ENCODE measurements at regions of chr16 and their contacts with region 1.

Region 1: GRCh38 chr16:68590201-68590994 is 51.3 kb downstream of the ZFP90 start:
- DNase-seq: peak; percentile 89
- ATAC-seq: peak; percentile 99
- H3K4me3 Mint-ChIP-seq: no peak overlapping the region
- H3K27ac Mint-ChIP-seq: no peak overlapping the region
- H3K4me1 Mint-ChIP-seq: peaks cover 2% of the 10 kb centered on the region
- H3K27me3 Mint-ChIP-seq: no peaks in the 10 kb centered on the region

Region 2: GRCh38 chr16:68574479-68574878 is 15.9 kb before region 1 on chr16:
- CTCF ChIA-PET with region 1: interaction called, 16 read pairs
- POLR2A ChIA-PET with region 1: no interaction called
- intact Hi-C with region 1: no loop called
- DNase-seq: no peak
- ATAC-seq: no peak
- H3K4me3 Mint-ChIP-seq: no peak overlapping the region
- H3K27ac Mint-ChIP-seq: no peak overlapping the region
- H3K4me1 Mint-ChIP-seq: no peaks in the 10 kb centered on the region
- H3K27me3 Mint-ChIP-seq: no peaks in the 10 kb centered on the region

Region 3: DNA sequence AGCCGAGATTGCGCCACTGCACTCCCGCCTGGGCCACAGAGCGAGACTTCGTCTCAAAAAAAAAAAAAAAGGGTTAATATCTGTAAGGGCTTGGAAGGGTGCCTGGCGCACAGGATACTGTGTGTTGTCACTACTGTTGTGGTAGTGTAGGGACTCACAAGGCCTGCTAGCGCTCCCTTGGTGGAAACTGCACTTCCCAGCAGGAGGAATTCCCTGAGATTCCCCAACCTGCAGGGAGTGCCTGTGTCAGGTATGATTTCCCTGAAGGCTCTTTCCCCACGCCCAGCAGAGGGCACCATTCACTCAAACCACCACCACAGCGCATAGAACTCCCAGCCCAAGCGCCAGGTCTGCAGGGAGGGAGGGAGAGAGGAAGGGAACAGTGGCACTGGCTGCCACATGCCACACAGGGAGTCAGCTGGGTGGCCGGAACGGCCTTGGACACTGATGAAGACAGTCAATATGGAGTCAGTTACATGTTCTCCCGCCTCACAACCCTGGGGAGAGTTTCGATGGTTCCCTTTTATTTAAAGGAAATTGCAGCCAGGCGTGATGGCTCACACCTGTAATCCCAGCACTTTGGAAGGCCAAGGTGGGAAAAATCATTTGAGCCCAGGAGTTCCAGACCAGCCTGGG is 114.0 kb after region 1 on chr16:
- CTCF ChIA-PET with region 1: interaction called, 9 read pairs
- POLR2A ChIA-PET with region 1: no interaction called
- intact Hi-C with region 1: loop called in 1 of 2 experiments (anchors 5 kb)
- DNase-seq: peak; percentile 83
- ATAC-seq: peak; percentile 91
- H3K4me3 Mint-ChIP-seq: no peak overlapping the region
- H3K27ac Mint-ChIP-seq: peak overlapping the region; percentile 39
- H3K4me1 Mint-ChIP-seq: peaks cover 5% of the 10 kb centered on the region
- H3K27me3 Mint-ChIP-seq: peaks cover 3% of the 10 kb centered on the region

Region 4: DNA sequence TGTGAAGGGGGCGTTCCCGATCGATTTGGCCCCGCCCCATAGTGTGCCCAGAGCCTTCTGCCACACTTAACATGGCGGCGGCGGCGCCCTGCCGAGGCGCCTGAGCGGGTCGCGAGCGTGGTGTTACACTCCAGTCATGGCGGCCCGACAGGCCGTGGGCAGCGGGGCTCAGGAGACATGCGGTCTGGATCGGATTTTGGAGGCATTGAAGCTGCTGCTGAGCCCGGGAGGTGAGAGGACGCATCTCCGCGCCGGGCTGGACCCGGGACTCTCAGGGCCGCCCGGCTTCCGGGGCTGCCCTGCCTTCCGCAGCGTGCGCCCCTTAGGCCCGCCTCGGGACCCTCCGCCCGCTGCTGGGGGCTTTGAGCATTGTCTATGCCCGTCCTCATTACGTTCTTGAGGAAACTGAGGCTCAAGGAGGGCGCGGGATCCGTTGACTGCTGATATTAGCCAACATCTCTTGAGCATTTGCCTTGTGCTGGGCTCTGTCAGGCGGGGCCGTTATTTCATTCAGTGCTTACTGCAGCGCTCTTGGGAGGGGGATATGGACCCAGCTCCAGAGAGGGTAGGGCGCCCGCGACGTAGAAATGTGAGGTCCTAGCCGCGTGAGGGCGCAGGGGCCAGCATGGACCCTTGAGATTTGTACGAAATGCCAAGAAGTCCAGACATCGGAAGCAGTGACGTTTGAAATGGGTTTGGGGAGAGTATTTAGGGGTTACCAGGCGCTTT is 253.2 kb after region 1 on chr16 and contains the start of gene TANGO6:
- CTCF ChIA-PET with region 1: interaction called, 12 read pairs
- POLR2A ChIA-PET with region 1: no interaction called
- intact Hi-C with region 1: loop called (anchors 2 kb)
- DNase-seq: peak; percentile 95
- ATAC-seq: peak; percentile 93
- H3K4me3 Mint-ChIP-seq: peak within 1 kb of the TSS; percentile 84
- H3K27ac Mint-ChIP-seq: peak within 1 kb of the TSS; percentile 91
- H3K4me1 Mint-ChIP-seq: peaks cover 27% of the 10 kb centered on the region
- H3K27me3 Mint-ChIP-seq: no peaks in the 10 kb centered on the region
- total RNA-seq, gene TANGO6: 29.7 to 31.2 TPM

Region 5: GRCh38 chr16:69123910-69124309 is 533.5 kb after region 1 on chr16:
- CTCF ChIA-PET with region 1: interaction called, 8 read pairs
- POLR2A ChIA-PET with region 1: no interaction called
- intact Hi-C with region 1: loop called in 1 of 2 experiments (anchors 2 kb)
- DNase-seq: peak; percentile 79
- ATAC-seq: peak; percentile 51
- H3K4me3 Mint-ChIP-seq: no peak overlapping the region
- H3K27ac Mint-ChIP-seq: no peak overlapping the region
- H3K4me1 Mint-ChIP-seq: peaks cover 20% of the 10 kb centered on the region
- H3K27me3 Mint-ChIP-seq: no peaks in the 10 kb centered on the region

Measured in activated CD4-positive, alpha-beta T cell treated with anti-CD3 and anti-CD28 coated beads for 36 hours (primary cell).